ENCODE measurements at regions of chr10 and their contacts with region 1.

Region 1: DNA sequence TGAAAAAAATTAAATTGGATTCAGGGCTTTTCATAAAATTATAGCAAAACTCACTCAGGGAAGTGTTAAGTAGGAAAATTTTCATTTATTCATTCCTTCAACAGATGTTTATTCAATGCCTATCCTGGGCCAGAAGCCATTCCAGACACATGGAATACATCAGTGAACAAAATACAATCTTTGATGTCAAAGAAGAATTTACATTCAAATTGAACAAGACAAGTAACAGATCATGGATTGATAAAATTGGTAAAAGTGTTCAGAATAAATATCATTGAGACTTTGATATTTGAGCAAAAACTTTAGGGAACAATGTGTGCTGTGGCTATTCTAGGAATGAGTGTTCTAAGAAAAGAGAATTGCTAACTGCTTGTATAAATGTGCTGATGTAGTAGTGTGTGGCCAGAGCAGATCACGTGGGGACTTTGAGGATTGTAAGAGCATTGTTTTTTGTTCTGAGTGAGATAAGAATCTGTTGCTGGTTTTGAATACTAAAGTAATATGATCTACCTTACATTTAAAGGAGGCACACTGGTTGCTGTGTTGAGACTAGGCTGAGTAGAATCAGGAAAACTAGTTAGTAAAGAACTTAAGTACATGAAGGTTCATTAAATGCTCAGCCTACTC is 957.2 kb downstream of the PCDH15 start:
- DNase-seq: no peak
- ATAC-seq: no peak
- H3K4me3 ChIP-seq: no peak overlapping the region
- H3K4me3 Mint-ChIP-seq: no peak overlapping the region
- H3K27ac ChIP-seq: no peak overlapping the region
- H3K27ac Mint-ChIP-seq: no peak overlapping the region
- H3K4me1 ChIP-seq: no peaks in the 10 kb centered on the region
- H3K4me1 Mint-ChIP-seq: no peaks in the 10 kb centered on the region
- H3K27me3 ChIP-seq: no peaks in the 10 kb centered on the region
- H3K27me3 Mint-ChIP-seq: no peaks in the 10 kb centered on the region

Region 2: DNA sequence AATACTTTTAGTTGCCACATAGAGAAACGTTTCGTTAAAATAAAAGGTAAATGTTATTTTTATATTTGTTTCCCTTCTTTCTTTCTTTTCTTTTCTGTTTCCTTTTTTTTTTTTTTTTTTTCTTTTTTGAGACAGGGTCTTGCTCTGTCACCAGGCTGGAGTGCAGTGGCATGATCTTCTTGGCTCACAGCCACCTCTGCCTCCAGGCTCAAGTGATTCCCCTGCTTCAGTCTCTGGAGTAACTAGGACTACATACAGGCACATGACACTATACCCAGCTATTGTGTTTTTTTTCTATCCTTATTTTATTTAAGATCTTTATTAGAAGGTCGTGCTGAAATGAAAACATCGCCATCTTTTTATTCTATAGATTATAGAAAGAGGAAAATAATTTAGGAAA is 409.4 kb before region 1 on chr10:
- CTCF ChIA-PET with region 1: no interaction called
- POLR2A ChIA-PET with region 1: no interaction called
- intact Hi-C with region 1: no loop called
- DNase-seq: no peak
- ATAC-seq: no peak
- H3K4me3 ChIP-seq: no peak overlapping the region
- H3K4me3 Mint-ChIP-seq: no peak overlapping the region
- H3K27ac ChIP-seq: no peak overlapping the region
- H3K27ac Mint-ChIP-seq: no peak overlapping the region
- H3K4me1 ChIP-seq: no peaks in the 10 kb centered on the region
- H3K4me1 Mint-ChIP-seq: no peaks in the 10 kb centered on the region
- H3K27me3 ChIP-seq: no peaks in the 10 kb centered on the region
- H3K27me3 Mint-ChIP-seq: no peaks in the 10 kb centered on the region

Region 3: GRCh38 chr10:53886325-53887300 is 42.8 kb after region 1 on chr10:
- CTCF ChIA-PET with region 1: no interaction called
- POLR2A ChIA-PET with region 1: no interaction called
- intact Hi-C with region 1: loop called in 1 of 2 experiments (anchors 1 kb)
- DNase-seq: no peak
- ATAC-seq: no peak
- H3K4me3 ChIP-seq: no peak overlapping the region
- H3K4me3 Mint-ChIP-seq: no peak overlapping the region
- H3K27ac ChIP-seq: no peak overlapping the region
- H3K27ac Mint-ChIP-seq: no peak overlapping the region
- H3K4me1 ChIP-seq: no peaks in the 10 kb centered on the region
- H3K4me1 Mint-ChIP-seq: peaks cover 0 to 2% (median 0%) of the 10 kb centered on the region in 7 donors
- H3K27me3 ChIP-seq: no peaks in the 10 kb centered on the region
- H3K27me3 Mint-ChIP-seq: no peaks in the 10 kb centered on the region